AG04450 (cell line): ENCODE measurements at regions of chr21 and their contacts with region 1.

Region 1: DNA sequence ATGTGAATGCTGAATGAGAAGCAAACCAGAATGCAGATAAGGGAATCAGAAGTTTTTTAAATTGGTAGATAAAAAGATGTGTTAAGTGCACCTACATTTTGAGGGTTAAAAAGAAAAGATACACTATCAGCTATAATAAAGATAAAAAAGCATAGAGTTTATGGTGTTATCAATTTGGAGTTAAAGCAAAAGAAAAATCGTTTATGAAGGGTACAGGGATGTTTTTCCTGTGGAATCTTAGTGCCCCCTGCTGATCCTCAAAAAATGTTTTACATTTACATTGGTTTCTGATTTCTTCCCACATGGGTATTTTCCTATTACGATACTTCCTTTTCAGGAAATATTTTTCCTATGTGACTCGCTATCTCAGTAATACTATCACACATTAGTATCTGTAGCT is 293.5 kb downstream of the MRPL39 start:
- DNase-seq: peak; percentile 20
- H3K4me3 ChIP-seq: no peak overlapping the region
- H3K27ac ChIP-seq: no peak overlapping the region
- H3K27me3 ChIP-seq: no peaks in the 10 kb centered on the region
- CTCF ChIP-seq: peak; percentile 59

Region 2: GRCh38 chr21:24895885-24896734 is 417.7 kb before region 1 on chr21:
- CTCF ChIA-PET with region 1: interaction called, 14 read pairs
- POLR2A ChIA-PET with region 1: no interaction called
- DNase-seq: no peak
- H3K4me3 ChIP-seq: no peak overlapping the region
- H3K27ac ChIP-seq: no peak overlapping the region
- H3K27me3 ChIP-seq: no peaks in the 10 kb centered on the region
- CTCF ChIP-seq: peak; percentile 61

Region 3: DNA sequence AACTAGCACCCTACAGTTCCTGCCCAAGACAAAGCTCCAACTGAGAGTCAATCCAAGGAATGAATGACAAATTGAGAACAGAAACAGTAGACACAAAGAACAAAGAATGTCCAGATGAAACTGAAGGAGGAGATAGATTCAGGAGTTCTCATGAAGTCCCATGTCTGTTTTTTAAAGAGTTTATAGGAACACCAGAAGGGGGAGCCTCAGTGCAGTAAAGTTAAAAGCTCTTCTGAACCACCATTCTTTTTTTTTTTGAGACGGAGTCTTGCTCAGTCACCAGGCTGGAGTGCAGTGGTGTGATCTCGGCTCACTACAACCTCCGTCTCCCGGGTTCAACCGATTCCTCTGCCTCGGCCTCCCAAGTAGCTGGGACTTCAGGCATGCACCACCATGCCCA is 30.1 kb before region 1 on chr21:
- CTCF ChIA-PET with region 1: interaction called, 31 read pairs
- POLR2A ChIA-PET with region 1: no interaction called
- DNase-seq: peak; percentile 7
- H3K4me3 ChIP-seq: no peak overlapping the region
- H3K27ac ChIP-seq: no peak overlapping the region
- H3K27me3 ChIP-seq: no peaks in the 10 kb centered on the region
- CTCF ChIP-seq: peak; percentile 53

Region 4: GRCh38 chr21:25329227-25329825 is 15.5 kb after region 1 on chr21:
- CTCF ChIA-PET with region 1: interaction called, 23 read pairs
- POLR2A ChIA-PET with region 1: no interaction called
- DNase-seq: peak; percentile 59
- H3K4me3 ChIP-seq: no peak overlapping the region
- H3K27ac ChIP-seq: peak overlapping the region; percentile 82
- H3K27me3 ChIP-seq: no peaks in the 10 kb centered on the region
- CTCF ChIP-seq: no peak